Tibial artery (tissue), 4 donors: ENCODE measurements at regions of chr2 and their contacts with region 1.

Region 1: GRCh38 chr2:64040161-64040560 is 20.9 kb upstream of the VPS54 start:
- DNase-seq: no peak
- H3K4me3 ChIP-seq: no peak overlapping the region
- H3K27ac ChIP-seq: no peak overlapping the region
- H3K4me1 ChIP-seq: no peaks in the 10 kb centered on the region
- H3K27me3 ChIP-seq: no peaks in the 10 kb centered on the region
- CTCF ChIP-seq: no peak

Region 2: DNA sequence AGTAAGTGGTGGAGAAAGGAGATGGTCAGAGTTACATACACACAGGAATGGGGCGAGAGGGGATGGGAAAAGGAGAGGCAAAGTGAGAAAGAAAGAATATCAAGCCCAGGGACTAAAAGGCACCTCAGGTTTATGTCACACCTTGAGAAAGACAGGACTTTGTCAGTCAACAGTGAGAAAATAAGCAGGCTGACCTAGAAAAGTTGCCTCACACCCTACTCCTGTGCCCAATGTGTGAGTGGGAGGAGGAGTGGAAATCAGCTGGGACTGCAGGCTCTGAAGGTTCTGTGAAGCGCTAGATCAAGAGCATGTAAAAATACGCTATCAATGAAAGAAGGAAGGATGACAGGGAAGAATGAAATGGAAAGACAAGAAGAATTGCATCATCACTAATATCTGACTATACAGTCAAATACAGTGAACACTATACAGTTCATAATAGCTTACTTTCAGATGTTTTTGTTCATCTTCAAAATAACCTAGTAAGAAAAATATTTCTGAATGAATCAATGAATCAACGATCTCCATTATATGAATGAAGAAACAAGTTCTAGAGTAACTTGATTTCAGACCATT is 31.6 kb before region 1 on chr2:
- intact Hi-C with region 1: no loop called
- DNase-seq: no peak
- H3K4me3 ChIP-seq: no peak overlapping the region
- H3K27ac ChIP-seq: no peak overlapping the region
- H3K4me1 ChIP-seq: peaks cover 0 to 33% (median 5%) of the 10 kb centered on the region in 4 donors
- H3K27me3 ChIP-seq: no peaks in the 10 kb centered on the region
- CTCF ChIP-seq: no peak

Region 3: DNA sequence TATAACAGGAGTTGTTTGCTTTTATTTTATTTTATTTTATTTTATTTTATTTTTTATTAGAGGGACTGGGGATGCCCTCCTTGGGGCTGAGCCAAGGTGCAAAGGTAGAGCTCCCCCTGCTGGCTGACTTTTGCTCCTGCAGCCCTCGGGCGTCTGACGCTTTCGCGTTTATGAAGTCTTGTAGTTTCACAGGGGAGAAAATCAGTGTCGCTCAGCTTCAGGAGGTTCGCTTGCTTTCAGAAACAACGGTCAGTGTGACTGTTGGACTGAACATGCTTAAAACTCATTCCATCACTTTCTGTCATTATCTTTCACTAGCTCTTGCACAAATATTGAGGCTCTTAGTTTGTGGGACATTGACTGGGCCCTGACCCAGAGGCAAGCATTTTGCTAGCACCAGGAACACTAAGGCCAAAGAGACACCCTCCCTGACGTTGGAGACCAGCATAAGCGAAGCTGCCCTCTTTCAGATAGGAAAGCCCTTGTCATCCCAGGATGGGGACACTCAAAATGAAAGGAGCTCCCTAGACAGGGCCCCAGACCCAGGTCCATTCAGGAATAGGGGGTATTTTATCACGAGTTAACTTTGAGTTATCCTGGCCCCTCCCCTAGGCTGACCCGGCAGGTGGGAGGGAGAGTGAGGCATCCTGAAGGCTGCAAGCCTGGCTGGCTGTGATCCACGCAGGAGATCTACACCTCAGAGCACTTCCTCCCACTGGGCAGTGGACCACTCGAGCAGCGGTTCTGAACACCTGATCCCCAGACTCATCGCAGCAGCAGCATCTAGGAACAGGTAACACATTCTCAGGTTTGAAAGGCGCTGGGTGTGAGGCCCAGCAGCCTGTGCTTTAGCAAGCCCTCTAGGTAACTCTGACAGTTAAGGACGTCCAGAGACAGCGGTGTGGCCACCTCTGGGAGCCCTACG is 448.2 kb after region 1 on chr2:
- intact Hi-C with region 1: loop called (anchors 10 kb)
- DNase-seq: peak; percentile 38 to 75
- H3K4me3 ChIP-seq: no peak overlapping the region
- H3K27ac ChIP-seq: no peak overlapping the region
- H3K4me1 ChIP-seq: peaks cover 0 to 26% (median 14%) of the 10 kb centered on the region in 4 donors
- H3K27me3 ChIP-seq: no peaks in the 10 kb centered on the region
- CTCF ChIP-seq: peak; percentile 78 to 93